ENCODE measurements at regions of chr16 and their contacts with region 1.

Region 1: GRCh38 chr16:28277537-28278388 is 14.6 kb upstream of the SBK1 start:
- DNase-seq: peak; percentile 85
- H3K4me3 Mint-ChIP-seq: peak overlapping the region; percentile 22
- H3K27ac Mint-ChIP-seq: peak overlapping the region; percentile 62
- H3K4me1 Mint-ChIP-seq: peaks cover 37% of the 10 kb centered on the region
- H3K27me3 Mint-ChIP-seq: peaks cover 26% of the 10 kb centered on the region

Region 2: GRCh38 chr16:28267356-28267755 is 10.4 kb before region 1 on chr16:
- CTCF ChIA-PET with region 1: interaction called, 11 read pairs
- POLR2A ChIA-PET with region 1: no interaction called
- DNase-seq: no peak
- H3K4me3 Mint-ChIP-seq: no peak overlapping the region
- H3K27ac Mint-ChIP-seq: no peak overlapping the region
- H3K4me1 Mint-ChIP-seq: no peaks in the 10 kb centered on the region
- H3K27me3 Mint-ChIP-seq: peaks cover 29% of the 10 kb centered on the region

Region 3: GRCh38 chr16:28291873-28292660 is 14.3 kb after region 1 on chr16 and contains the start of gene SBK1:
- CTCF ChIA-PET with region 1: interaction called, 9 read pairs
- POLR2A ChIA-PET with region 1: interaction called, 11 read pairs
- DNase-seq: peak; percentile 86
- H3K4me3 Mint-ChIP-seq: peak within 1 kb of the TSS; percentile 80
- H3K27ac Mint-ChIP-seq: peak within 1 kb of the TSS; percentile 62
- H3K4me1 Mint-ChIP-seq: peaks cover 63% of the 10 kb centered on the region
- H3K27me3 Mint-ChIP-seq: peaks cover 25% of the 10 kb centered on the region
- total RNA-seq, gene SBK1: 9.8 TPM

Region 4: GRCh38 chr16:28309811-28310311 is 32.1 kb after region 1 on chr16:
- CTCF ChIA-PET with region 1: interaction called, 31 read pairs
- POLR2A ChIA-PET with region 1: interaction called, 8 read pairs
- DNase-seq: peak; percentile 90
- H3K4me3 Mint-ChIP-seq: peak overlapping the region; percentile 30
- H3K27ac Mint-ChIP-seq: peak overlapping the region; percentile 91
- H3K4me1 Mint-ChIP-seq: peaks cover 40% of the 10 kb centered on the region
- H3K27me3 Mint-ChIP-seq: no peaks in the 10 kb centered on the region

Region 5: GRCh38 chr16:28317040-28317880 is 39.5 kb after region 1 on chr16:
- CTCF ChIA-PET with region 1: interaction called, 170 read pairs
- POLR2A ChIA-PET with region 1: interaction called, 11 read pairs
- DNase-seq: peak; percentile 73
- H3K4me3 Mint-ChIP-seq: no peak overlapping the region
- H3K27ac Mint-ChIP-seq: no peak overlapping the region
- H3K4me1 Mint-ChIP-seq: peaks cover 8% of the 10 kb centered on the region
- H3K27me3 Mint-ChIP-seq: no peaks in the 10 kb centered on the region

Measured in activated CD4-positive, alpha-beta memory T cell treated with anti-CD3 and anti-CD28 coated beads, Interleukin-2, amount 10 ng/mL, durations not matched to agents 7 days and 5 days (primary cell).